Activated CD4-positive, alpha-beta T cell treated with anti-CD3 and anti-CD28 coated beads for 36 hours (primary cell): ENCODE measurements at regions of chr6 and their contacts with region 1.

Region 1: DNA sequence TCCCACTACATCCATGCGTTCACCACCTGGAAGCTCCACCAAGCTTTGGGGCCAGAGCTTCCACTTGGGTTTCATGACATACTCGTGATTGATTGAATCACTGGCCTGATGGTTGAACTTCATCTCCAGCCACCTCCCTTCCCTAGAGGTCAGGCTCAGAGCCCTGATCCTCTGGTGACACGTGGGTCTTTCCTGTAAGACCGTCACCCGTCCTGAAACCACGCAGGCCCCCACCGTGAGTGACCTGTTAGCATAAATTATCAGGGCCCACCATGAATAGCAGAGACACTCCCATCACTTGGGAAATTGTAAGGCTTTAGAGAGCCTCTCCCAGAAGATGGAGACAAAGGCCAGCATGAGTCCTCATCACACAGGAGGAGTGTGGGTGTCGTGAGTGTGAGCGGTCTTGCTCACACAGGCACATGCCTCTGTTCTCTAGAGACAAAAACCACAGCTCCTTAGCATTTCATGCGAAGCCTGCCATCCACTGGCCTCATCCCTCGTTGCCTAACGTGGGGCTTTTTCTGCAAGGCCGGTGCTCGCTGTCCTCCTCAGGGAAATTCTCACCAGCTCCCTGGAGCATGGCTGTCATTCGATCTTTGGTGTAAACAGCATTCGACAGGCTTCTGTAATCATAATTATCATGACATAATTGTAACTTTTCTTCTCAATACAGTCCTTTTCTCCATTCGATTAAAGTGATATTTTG is 65.1 kb upstream of the DUSP22 start:
- DNase-seq: peak; percentile 61
- ATAC-seq: no peak
- H3K4me3 Mint-ChIP-seq: no peak overlapping the region
- H3K27ac Mint-ChIP-seq: peak overlapping the region; percentile 52
- H3K4me1 Mint-ChIP-seq: peaks cover 70% of the 10 kb centered on the region
- H3K27me3 Mint-ChIP-seq: peaks cover 2% of the 10 kb centered on the region

Region 2: DNA sequence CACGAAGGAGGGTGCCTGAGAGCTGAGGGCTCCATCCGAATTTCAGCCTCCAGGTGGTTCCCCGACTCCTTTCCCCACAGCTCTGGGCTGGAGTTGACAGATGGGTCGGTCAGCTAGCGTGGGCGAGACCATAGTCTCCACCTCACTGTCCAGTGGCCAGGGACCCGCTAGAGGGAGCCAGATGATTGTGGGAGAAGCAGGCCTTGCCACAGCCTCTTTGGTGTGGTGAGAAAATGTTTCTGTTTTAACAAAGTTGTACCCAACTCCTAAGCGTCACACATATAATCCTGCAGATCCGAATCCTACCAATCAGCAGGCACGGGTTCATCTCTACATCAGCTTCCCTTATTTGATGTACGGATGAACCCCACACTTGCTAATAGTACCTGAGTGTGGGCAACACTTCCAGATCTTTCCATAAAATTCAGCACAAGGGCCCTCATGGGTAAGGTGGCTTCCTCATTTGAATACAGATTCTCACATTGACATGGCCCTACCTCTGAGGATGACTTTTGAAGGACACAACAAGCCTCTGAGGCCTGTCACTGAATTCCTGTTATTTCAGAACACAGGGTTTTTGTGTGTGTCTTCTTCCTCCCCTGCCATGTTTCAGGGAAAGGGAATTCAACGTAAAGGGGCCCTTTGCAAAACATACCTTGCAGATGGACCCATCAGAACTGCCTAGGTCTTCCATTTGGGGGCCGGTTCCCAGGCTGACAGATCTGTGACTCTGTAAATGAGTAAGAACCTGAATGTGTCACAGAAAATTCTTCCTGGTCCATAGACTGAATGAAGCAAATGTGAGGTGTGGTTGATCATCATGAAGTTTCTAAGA is 38.2 kb before region 1 on chr6:
- CTCF ChIA-PET with region 1: interaction called, 13 read pairs
- POLR2A ChIA-PET with region 1: interaction called, 3 read pairs
- intact Hi-C with region 1: loop called (anchors 1 kb)
- DNase-seq: peak; percentile 92
- ATAC-seq: peak; percentile 78
- H3K4me3 Mint-ChIP-seq: no peak overlapping the region
- H3K27ac Mint-ChIP-seq: peak overlapping the region; percentile 95
- H3K4me1 Mint-ChIP-seq: peaks cover 52% of the 10 kb centered on the region
- H3K27me3 Mint-ChIP-seq: peaks cover 3% of the 10 kb centered on the region

Region 3: DNA sequence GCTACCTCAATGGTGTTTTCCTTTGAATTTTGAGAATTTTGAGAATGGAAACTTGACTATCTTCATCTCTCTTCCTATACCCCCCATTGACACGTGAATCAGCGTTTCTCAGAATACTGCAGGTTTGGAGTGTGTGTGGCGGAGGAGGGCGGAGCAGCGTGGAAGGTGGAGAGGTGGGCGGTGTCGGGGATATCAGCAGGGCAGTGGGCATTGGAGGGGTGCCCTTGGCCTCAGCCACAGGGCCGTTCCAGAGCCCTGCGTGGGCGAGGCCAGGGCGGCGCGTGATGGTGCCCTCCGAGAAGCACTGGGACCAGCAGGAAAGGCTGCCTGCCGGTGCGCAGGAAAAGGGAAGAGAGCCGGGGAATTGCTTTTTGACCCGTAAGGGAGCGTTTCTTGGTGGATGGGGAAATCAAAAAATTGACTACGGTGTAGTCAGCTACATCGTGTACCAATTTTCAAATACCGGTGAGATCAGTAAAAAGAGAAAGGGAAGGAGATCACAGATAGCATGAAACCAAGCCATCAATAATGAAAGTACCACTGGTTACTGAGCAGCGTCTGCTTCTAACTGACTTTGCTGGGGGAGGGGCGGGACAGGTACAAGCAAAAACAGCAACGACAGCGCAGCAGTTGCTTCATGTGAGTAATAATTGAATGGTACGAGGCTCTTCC is 17.7 kb before region 1 on chr6:
- CTCF ChIA-PET with region 1: no interaction called
- POLR2A ChIA-PET with region 1: no interaction called
- intact Hi-C with region 1: loop called in 1 of 2 experiments (anchors 2 kb)
- DNase-seq: peak; percentile 88
- ATAC-seq: peak; percentile 95
- H3K4me3 Mint-ChIP-seq: peak overlapping the region; percentile 64
- H3K27ac Mint-ChIP-seq: peak overlapping the region; percentile 78
- H3K4me1 Mint-ChIP-seq: peaks cover 33% of the 10 kb centered on the region
- H3K27me3 Mint-ChIP-seq: peaks cover 30% of the 10 kb centered on the region

Region 4: GRCh38 chr6:251920-252319 is 24.7 kb after region 1 on chr6:
- CTCF ChIA-PET with region 1: interaction called, 3 read pairs
- POLR2A ChIA-PET with region 1: no interaction called
- intact Hi-C with region 1: loop called in 1 of 2 experiments (anchors 1 kb)
- DNase-seq: no peak
- ATAC-seq: peak; percentile 97
- H3K4me3 Mint-ChIP-seq: no peak overlapping the region
- H3K27ac Mint-ChIP-seq: peak overlapping the region; percentile 92
- H3K4me1 Mint-ChIP-seq: peaks cover 42% of the 10 kb centered on the region
- H3K27me3 Mint-ChIP-seq: no peaks in the 10 kb centered on the region

Region 5: GRCh38 chr6:319177-320131 is 92.2 kb after region 1 on chr6:
- CTCF ChIA-PET with region 1: interaction called, 3 read pairs
- POLR2A ChIA-PET with region 1: no interaction called
- intact Hi-C with region 1: loop called in 1 of 2 experiments (anchors 1 kb)
- DNase-seq: peak; percentile 45
- ATAC-seq: peak; percentile 77
- H3K4me3 Mint-ChIP-seq: no peak overlapping the region
- H3K27ac Mint-ChIP-seq: peak overlapping the region; percentile 28
- H3K4me1 Mint-ChIP-seq: peaks cover 24% of the 10 kb centered on the region
- H3K27me3 Mint-ChIP-seq: no peaks in the 10 kb centered on the region

Region 6: GRCh38 chr6:498795-499231 is 271.6 kb after region 1 on chr6:
- CTCF ChIA-PET with region 1: interaction called, 4 read pairs
- POLR2A ChIA-PET with region 1: no interaction called
- intact Hi-C with region 1: loop called in 1 of 2 experiments (anchors 2 kb)
- DNase-seq: peak; percentile 81
- ATAC-seq: peak; percentile 64
- H3K4me3 Mint-ChIP-seq: peak overlapping the region; percentile 63
- H3K27ac Mint-ChIP-seq: peak overlapping the region; percentile 93
- H3K4me1 Mint-ChIP-seq: peaks cover 87% of the 10 kb centered on the region
- H3K27me3 Mint-ChIP-seq: no peaks in the 10 kb centered on the region

Region 7: DNA sequence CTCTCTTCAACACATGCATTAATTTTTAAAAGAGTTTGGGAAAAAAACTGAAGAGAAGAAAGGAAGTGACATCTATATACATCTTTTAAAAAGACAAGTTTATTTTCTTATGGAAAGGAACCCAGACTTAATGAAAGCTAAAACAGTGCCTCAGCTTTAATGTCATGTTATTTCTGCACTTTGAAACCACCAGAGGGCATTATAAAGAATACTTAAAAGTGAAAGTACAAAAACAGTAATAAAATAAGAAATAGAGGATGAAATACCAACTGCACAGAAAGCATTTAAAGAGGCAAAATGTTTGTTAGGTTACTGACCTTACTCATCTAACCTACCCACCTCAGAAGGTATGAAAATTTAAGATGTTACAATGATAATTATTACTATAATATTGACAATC is 330.9 kb after region 1 on chr6:
- CTCF ChIA-PET with region 1: no interaction called
- POLR2A ChIA-PET with region 1: no interaction called
- intact Hi-C with region 1: loop called in 1 of 2 experiments (anchors 5 kb)
- DNase-seq: no peak
- ATAC-seq: no peak
- H3K4me3 Mint-ChIP-seq: peak overlapping the region; percentile 15
- H3K27ac Mint-ChIP-seq: peak overlapping the region; percentile 90
- H3K4me1 Mint-ChIP-seq: peaks cover 63% of the 10 kb centered on the region
- H3K27me3 Mint-ChIP-seq: no peaks in the 10 kb centered on the region